ENCODE measurements at regions of chr4 and their contacts with region 1.

Region 1: DNA sequence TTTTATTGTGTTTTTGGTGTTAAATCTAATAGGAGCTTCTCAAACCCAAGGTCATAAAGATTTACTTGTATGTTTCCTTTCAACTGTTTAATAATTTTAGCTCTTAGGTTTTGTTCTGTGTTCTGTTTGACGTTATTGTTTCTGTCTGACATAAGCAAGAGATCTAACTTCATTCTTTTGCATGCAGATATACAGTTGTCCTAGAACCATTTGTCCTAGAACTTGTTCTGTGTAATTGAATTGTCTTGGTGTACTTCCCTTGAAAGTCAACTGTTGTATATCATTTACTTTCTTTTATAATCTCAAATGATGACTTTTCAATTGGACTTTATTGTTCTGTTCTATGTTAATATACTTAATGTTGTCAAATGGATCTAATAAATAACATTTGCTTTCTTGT is 977.1 kb downstream of the FAT4 start:
- DNase-seq: no peak
- H3K4me3 ChIP-seq: no peak overlapping the region
- H3K27ac ChIP-seq: no peak overlapping the region
- H3K4me1 ChIP-seq: no peaks in the 10 kb centered on the region
- H3K27me3 ChIP-seq: no peaks in the 10 kb centered on the region
- CTCF ChIP-seq: no peak

Region 2: GRCh38 chr4:126071346-126072333 is 220.2 kb before region 1 on chr4:
- dilution Hi-C with region 1: no loop called
- DNase-seq: no peak
- H3K4me3 ChIP-seq: no peak overlapping the region
- H3K27ac ChIP-seq: no peak overlapping the region
- H3K4me1 ChIP-seq: no peaks in the 10 kb centered on the region
- H3K27me3 ChIP-seq: no peaks in the 10 kb centered on the region
- CTCF ChIP-seq: no peak

Region 3: DNA sequence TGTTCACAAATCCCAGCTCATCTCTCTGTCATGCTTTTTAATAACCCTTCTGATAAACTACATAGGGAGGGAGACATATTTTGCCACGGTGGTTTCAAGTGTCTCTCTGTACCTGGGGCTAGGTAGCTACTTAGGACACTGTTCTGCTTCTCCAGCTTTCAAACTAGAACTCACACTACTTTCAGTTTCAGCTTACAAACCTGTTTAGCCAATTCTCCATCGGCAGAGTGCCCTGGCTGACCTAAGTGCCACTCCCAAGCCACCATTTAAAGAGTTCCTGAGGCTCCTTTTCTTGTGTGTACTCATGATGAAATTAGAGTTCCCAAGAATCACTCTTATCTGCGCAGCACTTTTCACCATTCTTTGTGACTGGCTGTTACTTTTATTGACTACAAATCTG is 77.9 kb before region 1 on chr4:
- dilution Hi-C with region 1: loop called (anchors 10 kb)
- DNase-seq: no peak
- H3K4me3 ChIP-seq: no peak overlapping the region
- H3K27ac ChIP-seq: no peak overlapping the region
- H3K4me1 ChIP-seq: no peaks in the 10 kb centered on the region
- H3K27me3 ChIP-seq: no peaks in the 10 kb centered on the region
- CTCF ChIP-seq: no peak

Region 4: GRCh38 chr4:126451237-126451873 is 159.5 kb after region 1 on chr4:
- dilution Hi-C with region 1: no loop called
- DNase-seq: no peak
- H3K4me3 ChIP-seq: no peak overlapping the region
- H3K27ac ChIP-seq: no peak overlapping the region
- H3K4me1 ChIP-seq: no peaks in the 10 kb centered on the region
- H3K27me3 ChIP-seq: no peaks in the 10 kb centered on the region
- CTCF ChIP-seq: no peak

Region 5: DNA sequence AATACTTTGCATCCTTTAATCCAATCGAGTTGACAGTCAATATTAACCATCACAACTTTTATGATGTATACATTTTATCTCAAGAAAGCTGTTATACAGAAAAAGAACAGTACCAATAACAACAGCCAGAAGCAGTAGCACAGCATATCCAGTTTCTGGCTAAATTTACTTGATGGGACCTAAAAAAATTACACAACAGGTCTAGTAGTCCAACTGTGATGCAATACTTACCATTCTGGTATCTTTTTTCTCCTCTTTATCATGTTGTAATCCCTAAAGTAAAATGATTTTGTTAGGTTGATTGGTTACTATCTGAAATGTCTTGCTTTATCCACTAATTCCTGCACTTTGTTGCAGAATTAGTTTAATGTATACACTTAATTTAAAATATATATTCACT is 173.5 kb after region 1 on chr4:
- dilution Hi-C with region 1: no loop called
- DNase-seq: no peak
- H3K4me3 ChIP-seq: no peak overlapping the region
- H3K27ac ChIP-seq: no peak overlapping the region
- H3K4me1 ChIP-seq: no peaks in the 10 kb centered on the region
- H3K27me3 ChIP-seq: no peaks in the 10 kb centered on the region
- CTCF ChIP-seq: no peak

Region 6: DNA sequence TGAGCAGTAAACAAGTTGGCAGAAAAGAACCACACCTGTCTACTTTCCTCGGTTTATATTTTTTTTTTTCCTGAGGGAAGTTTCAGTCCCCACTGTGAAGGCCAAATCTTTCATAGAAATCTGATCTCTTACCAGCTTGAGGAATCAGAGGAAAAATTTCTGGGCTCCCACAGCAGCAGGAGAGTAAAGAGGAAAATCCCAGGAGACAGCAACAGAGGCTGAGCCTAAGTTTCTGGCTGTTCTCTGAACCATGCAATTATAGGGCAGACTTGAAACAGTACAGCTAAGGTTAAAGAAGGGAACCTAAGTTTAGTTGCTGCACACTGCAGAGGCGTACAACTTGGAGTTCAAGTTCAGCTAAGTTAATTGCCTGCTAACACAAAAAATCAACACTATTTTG is 249.9 kb after region 1 on chr4:
- dilution Hi-C with region 1: no loop called
- DNase-seq: no peak
- H3K4me3 ChIP-seq: no peak overlapping the region
- H3K27ac ChIP-seq: no peak overlapping the region
- H3K4me1 ChIP-seq: no peaks in the 10 kb centered on the region
- H3K27me3 ChIP-seq: no peaks in the 10 kb centered on the region
- CTCF ChIP-seq: no peak